SK-N-SH (cell line): ENCODE measurements at regions of chrX and their contacts with region 1.

Region 1: GRCh38 chrX:2894885-2895292 is 34.2 kb downstream of the ARSD start:
- DNase-seq: peak; percentile 72
- H3K4me3 ChIP-seq: no peak overlapping the region
- H3K27ac ChIP-seq: peak overlapping the region in 1 of 2 experiments; percentile 93; a peak in 2 of 4 replicates
- H3K4me1 ChIP-seq: peaks cover 0 to 6% of the 10 kb centered on the region in 2 experiments; a peak in 2 of 4 replicates
- H3K27me3 ChIP-seq: no peaks in the 10 kb centered on the region
- CTCF ChIP-seq: no peak
- EP300 ChIP-seq: peak; percentile 43 to 98; a peak in 3 of 4 replicates
- RAD21 ChIP-seq: peak; percentile 6; the same call in 1 of the 2 replicates

Region 2: GRCh38 chrX:2928191-2928763 is 33.4 kb after region 1 on chrX:
- CTCF ChIA-PET with region 1: interaction called, 5 read pairs
- POLR2A ChIA-PET with region 1: interaction called, 39 read pairs
- DNase-seq: peak; percentile 80
- H3K4me3 ChIP-seq: peak overlapping the region; percentile 64 to 92
- H3K27ac ChIP-seq: peak overlapping the region; percentile 89 to 90
- H3K4me1 ChIP-seq: no peaks in the 10 kb centered on the region; a peak in 1 of 4 replicates
- H3K27me3 ChIP-seq: no peaks in the 10 kb centered on the region
- CTCF ChIP-seq: no peak
- EP300 ChIP-seq: no peak
- RAD21 ChIP-seq: no peak